Sigmoid colon (tissue), 7 donors: ENCODE measurements at regions of chr5 and their contacts with region 1.

Region 1: GRCh38 chr5:65035211-65036206 is 266.8 kb downstream of the CWC27 start:
- DNase-seq: peak; percentile 96
- H3K4me3 ChIP-seq: peak overlapping the region; percentile 55 to 67 (median 64)
- H3K27ac ChIP-seq: peak overlapping the region; percentile 91 to 93 (median 92)
- H3K4me1 ChIP-seq: peaks cover 0 to 43% (median 28%) of the 10 kb centered on the region in 4 donors
- H3K27me3 ChIP-seq: no peaks in the 10 kb centered on the region
- CTCF ChIP-seq: no peak
- EP300 ChIP-seq: peak in 2 of 4 donors; percentile 1 to 76
- POLR2A ChIP-seq: peak in 1 of 2 donors; percentile 29

Region 2: DNA sequence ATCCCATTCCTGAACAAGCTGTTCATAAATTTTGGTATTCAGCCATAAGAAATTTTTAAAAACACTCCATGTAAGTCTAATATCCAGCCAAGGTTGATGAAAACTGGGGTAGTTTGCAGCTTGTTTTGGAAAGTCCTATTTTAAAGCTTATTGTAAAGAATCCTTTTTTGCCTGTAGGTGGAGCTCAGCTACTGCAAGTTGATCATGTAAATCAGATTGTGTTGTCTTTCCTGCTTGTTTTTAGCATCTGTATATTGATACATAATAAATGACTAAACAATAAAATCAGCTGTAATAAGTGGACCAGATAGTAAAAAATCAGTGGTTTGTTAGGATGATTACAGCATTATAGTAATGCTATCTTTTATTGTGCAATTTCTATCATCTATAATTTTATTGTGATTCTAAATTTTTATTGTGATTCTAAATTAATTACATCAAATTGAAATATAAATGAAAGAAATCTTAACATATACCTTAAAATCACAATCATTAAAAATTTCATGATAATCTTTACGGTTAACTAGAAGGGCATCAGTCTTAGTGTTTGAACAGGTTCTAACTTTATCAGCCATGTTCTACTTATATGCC is 224.4 kb before region 1 on chr5:
- intact Hi-C with region 1: loop called (anchors 10 kb)
- DNase-seq: no peak
- H3K4me3 ChIP-seq: no peak overlapping the region
- H3K27ac ChIP-seq: no peak overlapping the region
- H3K4me1 ChIP-seq: peaks cover 0 to 6% (median 0%) of the 10 kb centered on the region in 4 donors
- H3K27me3 ChIP-seq: no peaks in the 10 kb centered on the region
- CTCF ChIP-seq: peak; percentile 39 to 58 (median 50)
- EP300 ChIP-seq: no peak
- POLR2A ChIP-seq: no peak

Region 3: DNA sequence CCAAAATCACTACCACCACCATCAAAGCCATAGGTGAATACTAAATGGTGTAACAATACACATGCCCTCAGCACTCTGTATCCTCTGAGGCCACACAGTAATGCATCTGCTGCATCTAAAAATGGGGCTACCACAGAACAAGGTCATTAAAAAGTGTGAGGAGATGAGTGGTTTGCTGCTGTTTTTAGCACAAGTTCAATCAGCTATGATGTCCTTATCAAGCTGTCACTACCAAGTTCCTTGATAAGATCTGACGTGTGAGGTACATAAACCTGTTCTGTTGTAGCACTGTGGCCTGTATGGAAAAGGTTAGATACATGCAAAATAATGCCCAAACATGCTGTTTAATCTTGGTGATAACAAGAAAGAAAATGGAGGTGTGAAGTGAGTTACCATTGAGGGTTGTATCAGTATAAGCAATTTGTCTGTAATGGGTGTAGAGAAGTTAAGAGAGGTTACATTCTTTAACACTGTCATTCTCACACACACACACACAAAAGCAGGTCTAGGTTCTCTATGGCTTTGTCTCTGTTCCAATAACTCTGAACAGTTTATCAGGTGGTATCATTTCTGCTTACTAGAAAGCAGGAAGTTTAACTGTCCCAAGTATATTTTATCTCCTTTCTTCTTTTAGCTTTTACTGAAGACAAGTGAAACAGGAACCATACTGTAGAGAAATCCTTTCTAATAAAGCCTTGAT is 13.8 kb before region 1 on chr5:
- intact Hi-C with region 1: loop called (anchors 2 kb)
- DNase-seq: no peak
- H3K4me3 ChIP-seq: no peak overlapping the region
- H3K27ac ChIP-seq: no peak overlapping the region
- H3K4me1 ChIP-seq: peaks cover 0 to 24% (median 13%) of the 10 kb centered on the region in 4 donors
- H3K27me3 ChIP-seq: no peaks in the 10 kb centered on the region
- CTCF ChIP-seq: no peak
- EP300 ChIP-seq: no peak
- POLR2A ChIP-seq: no peak

Region 4: GRCh38 chr5:65102828-65103711 is 67.6 kb after region 1 on chr5:
- intact Hi-C with region 1: loop called (anchors 2 kb)
- DNase-seq: peak; percentile 85
- H3K4me3 ChIP-seq: peak overlapping the region; percentile 49 to 66 (median 59)
- H3K27ac ChIP-seq: peak overlapping the region; percentile 78 to 86 (median 82)
- H3K4me1 ChIP-seq: peaks cover 0 to 6% (median 5%) of the 10 kb centered on the region in 4 donors
- H3K27me3 ChIP-seq: no peaks in the 10 kb centered on the region
- CTCF ChIP-seq: peak in 2 of 4 experiments; percentile 41 to 42
- EP300 ChIP-seq: no peak
- POLR2A ChIP-seq: no peak